HCT116 (cell line): ENCODE measurements at regions of chr5 and their contacts with region 1.

Region 1: GRCh38 chr5:126686451-126687126 is 85.8 kb downstream of the PHAX start:
- DNase-seq: no peak
- ATAC-seq: no peak
- H3K4me3 ChIP-seq: no peak overlapping the region
- H3K27ac ChIP-seq: no peak overlapping the region
- H3K4me1 ChIP-seq: no peaks in the 10 kb centered on the region
- H3K27me3 ChIP-seq: no peaks in the 10 kb centered on the region
- CTCF ChIP-seq: no peak
- POLR2A ChIP-seq: no peak
- RAD21 ChIP-seq: no peak

Region 2: DNA sequence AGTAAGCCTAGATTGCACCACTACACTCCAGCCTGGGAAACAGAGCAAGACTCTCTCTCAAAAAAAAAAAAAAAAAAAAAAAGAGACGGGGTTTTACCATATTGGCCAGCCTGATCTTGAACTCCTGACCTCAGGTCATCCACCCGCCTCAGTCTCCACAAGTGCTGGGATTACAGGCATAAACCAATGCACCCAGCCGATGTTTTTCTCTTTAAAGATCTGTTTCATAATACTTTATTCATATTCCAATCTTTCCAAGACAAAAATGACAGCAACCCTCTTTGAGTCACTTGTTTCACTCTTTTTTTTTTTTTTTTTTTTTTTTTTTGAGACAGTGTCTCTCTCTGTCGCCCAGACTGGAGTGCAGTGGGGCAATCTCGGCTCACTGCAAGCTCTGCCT is 76.8 kb after region 1 on chr5:
- CTCF ChIA-PET with region 1: no interaction called
- POLR2A ChIA-PET with region 1: no interaction called
- RAD21 ChIA-PET with region 1: no interaction called
- intact Hi-C with region 1: loop called (anchors 2 kb)
- DNase-seq: no peak
- ATAC-seq: no peak
- H3K4me3 ChIP-seq: no peak overlapping the region
- H3K27ac ChIP-seq: no peak overlapping the region
- H3K4me1 ChIP-seq: peaks cover 0 to 10% of the 10 kb centered on the region in 2 experiments; a peak in 1 of 4 replicates
- H3K27me3 ChIP-seq: no peaks in the 10 kb centered on the region
- CTCF ChIP-seq: no peak
- POLR2A ChIP-seq: no peak
- RAD21 ChIP-seq: no peak